Aorta (tissue), 5 donors: ENCODE measurements at regions of chr7 and their contacts with region 1.

Region 1: DNA sequence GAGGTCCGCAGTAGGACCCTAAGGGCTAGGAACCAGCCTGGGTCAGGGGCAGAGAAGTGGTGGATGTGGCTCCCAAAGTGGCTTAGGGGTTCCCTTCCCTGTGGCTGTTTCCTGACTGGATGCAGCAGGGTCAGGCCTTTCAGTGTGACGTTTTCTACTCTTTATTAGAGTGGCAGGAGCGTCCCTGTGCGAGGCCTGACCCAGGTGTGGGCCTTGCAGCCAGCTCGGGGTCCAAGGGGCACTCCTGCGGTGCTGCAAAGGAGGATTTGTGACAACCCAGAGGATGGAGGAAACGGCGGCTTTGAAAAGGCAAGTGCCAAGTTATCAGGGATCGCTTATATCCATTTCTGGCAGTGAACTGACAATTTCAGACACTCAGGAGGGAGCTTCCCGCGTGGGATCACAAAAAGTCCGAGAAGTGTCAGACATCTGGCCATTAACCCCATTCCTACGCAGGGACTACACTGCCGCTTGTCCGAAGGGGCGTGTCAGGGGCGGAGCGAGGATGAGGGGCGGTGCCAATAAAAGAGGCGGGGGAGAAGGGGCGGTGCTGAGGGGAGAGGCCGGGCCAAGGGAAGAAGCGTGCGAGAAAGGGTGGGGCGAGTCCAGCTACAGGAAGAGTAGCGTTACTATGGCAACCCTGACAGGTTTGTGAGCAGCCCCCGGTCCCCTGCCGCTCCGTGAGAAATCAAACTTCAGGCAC is 98.8 kb upstream of the ZNF722 start:
- DNase-seq: peak; percentile 83 to 95
- ATAC-seq: peak; percentile 94
- H3K4me3 ChIP-seq: peak overlapping the region; percentile 53
- H3K27ac ChIP-seq: no peak overlapping the region
- H3K4me1 ChIP-seq: no peaks in the 10 kb centered on the region
- H3K27me3 ChIP-seq: no peaks in the 10 kb centered on the region

Region 2: GRCh38 chr7:63925623-63926460 is 26.0 kb after region 1 on chr7:
- intact Hi-C with region 1: loop called in 1 of 2 experiments (anchors 2 kb)
- DNase-seq: peak; percentile 94 to 95
- ATAC-seq: peak; percentile 99
- H3K4me3 ChIP-seq: peak overlapping the region; percentile 65 to 76
- H3K27ac ChIP-seq: peak overlapping the region in 1 of 2 donors; percentile 77
- H3K4me1 ChIP-seq: no peaks in the 10 kb centered on the region
- H3K27me3 ChIP-seq: no peaks in the 10 kb centered on the region